ENCODE measurements at regions of chr13 and their contacts with region 1.

Region 1: GRCh38 chr13:33642374-33643068 is 175.4 kb upstream of the RFC3 start:
- DNase-seq: peak; percentile 83 to 86
- H3K4me3 ChIP-seq: no peak overlapping the region
- H3K4me3 Mint-ChIP-seq: peak overlapping the region; percentile 22
- H3K27ac Mint-ChIP-seq: peak overlapping the region; percentile 89
- H3K4me1 ChIP-seq: peaks cover 54% of the 10 kb centered on the region
- H3K4me1 Mint-ChIP-seq: peaks cover 60% of the 10 kb centered on the region
- H3K27me3 ChIP-seq: no peaks in the 10 kb centered on the region
- H3K27me3 Mint-ChIP-seq: no peaks in the 10 kb centered on the region
- CTCF ChIP-seq: no peak

Region 2: DNA sequence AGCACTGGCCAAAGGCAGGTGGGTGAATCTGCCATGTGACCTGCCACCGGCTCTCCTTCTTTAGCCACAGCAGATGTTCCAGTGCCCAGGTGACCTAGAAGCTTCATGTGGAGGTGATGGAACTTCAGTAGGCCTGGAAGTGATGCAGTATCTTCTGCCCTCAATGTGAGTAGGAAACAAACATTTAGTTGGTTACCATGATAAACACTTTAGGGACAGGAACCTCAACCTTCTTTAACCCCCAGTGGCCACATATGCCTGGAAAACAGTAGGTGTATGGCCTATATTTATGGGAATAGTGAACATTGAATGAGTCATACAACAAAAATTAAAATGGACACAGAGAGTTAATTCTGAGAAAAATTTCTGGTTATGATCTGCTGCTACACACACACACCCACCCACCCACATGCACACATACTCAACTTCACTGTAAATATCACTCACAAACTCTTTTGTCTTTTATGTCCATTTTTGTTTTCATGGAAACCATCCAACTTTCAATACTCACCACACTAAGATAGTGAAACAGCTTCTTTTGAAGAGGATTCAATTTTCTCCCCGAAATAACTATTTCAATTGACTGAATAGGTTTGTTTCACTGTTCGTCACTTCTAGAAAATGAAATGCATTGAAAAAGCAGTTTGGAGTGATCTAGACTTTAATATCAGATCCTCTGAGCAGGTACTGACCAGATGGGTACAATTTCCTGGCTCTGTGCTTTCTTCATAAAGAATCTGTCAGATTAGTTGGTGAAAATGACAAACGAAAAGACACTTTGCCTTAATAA is 454.2 kb before region 1 on chr13:
- CTCF ChIA-PET with region 1: no interaction called
- POLR2A ChIA-PET with region 1: no interaction called
- intact Hi-C with region 1: no loop called
- DNase-seq: no peak
- H3K4me3 ChIP-seq: no peak overlapping the region
- H3K4me3 Mint-ChIP-seq: no peak overlapping the region
- H3K27ac Mint-ChIP-seq: no peak overlapping the region
- H3K4me1 ChIP-seq: peaks cover 9% of the 10 kb centered on the region; the same call in 1 of the 2 replicates
- H3K4me1 Mint-ChIP-seq: no peaks in the 10 kb centered on the region
- H3K27me3 ChIP-seq: no peaks in the 10 kb centered on the region
- H3K27me3 Mint-ChIP-seq: no peaks in the 10 kb centered on the region
- CTCF ChIP-seq: no peak

Region 3: GRCh38 chr13:33665626-33666175 is 23.2 kb after region 1 on chr13:
- CTCF ChIA-PET with region 1: no interaction called
- POLR2A ChIA-PET with region 1: no interaction called
- intact Hi-C with region 1: no loop called
- DNase-seq: no peak
- H3K4me3 ChIP-seq: no peak overlapping the region
- H3K4me3 Mint-ChIP-seq: no peak overlapping the region
- H3K27ac Mint-ChIP-seq: no peak overlapping the region
- H3K4me1 ChIP-seq: no peaks in the 10 kb centered on the region
- H3K4me1 Mint-ChIP-seq: no peaks in the 10 kb centered on the region
- H3K27me3 ChIP-seq: no peaks in the 10 kb centered on the region
- H3K27me3 Mint-ChIP-seq: no peaks in the 10 kb centered on the region
- CTCF ChIP-seq: no peak

Region 4: GRCh38 chr13:33696530-33696929 is 54.0 kb after region 1 on chr13:
- CTCF ChIA-PET with region 1: no interaction called
- POLR2A ChIA-PET with region 1: no interaction called
- intact Hi-C with region 1: loop called (anchors 1 kb)
- DNase-seq: no peak
- H3K4me3 ChIP-seq: no peak overlapping the region
- H3K4me3 Mint-ChIP-seq: no peak overlapping the region
- H3K27ac Mint-ChIP-seq: peak overlapping the region; percentile 37
- H3K4me1 ChIP-seq: peaks cover 21% of the 10 kb centered on the region
- H3K4me1 Mint-ChIP-seq: peaks cover 14% of the 10 kb centered on the region
- H3K27me3 ChIP-seq: no peaks in the 10 kb centered on the region
- H3K27me3 Mint-ChIP-seq: no peaks in the 10 kb centered on the region
- CTCF ChIP-seq: no peak

Region 5: GRCh38 chr13:33931397-33932311 is 289.1 kb after region 1 on chr13:
- CTCF ChIA-PET with region 1: no interaction called
- POLR2A ChIA-PET with region 1: no interaction called
- intact Hi-C with region 1: no loop called
- DNase-seq: peak; percentile 41 to 78
- H3K4me3 ChIP-seq: no peak overlapping the region
- H3K4me3 Mint-ChIP-seq: no peak overlapping the region
- H3K27ac Mint-ChIP-seq: no peak overlapping the region
- H3K4me1 ChIP-seq: no peaks in the 10 kb centered on the region
- H3K4me1 Mint-ChIP-seq: no peaks in the 10 kb centered on the region
- H3K27me3 ChIP-seq: no peaks in the 10 kb centered on the region
- H3K27me3 Mint-ChIP-seq: no peaks in the 10 kb centered on the region
- CTCF ChIP-seq: peak; percentile 56 to 71

Measured in Caco-2 (cell line).